CD14-positive monocyte (primary cell): ENCODE measurements at regions of chr19 and their contacts with region 1.

Region 1: GRCh38 chr19:41263850-41264580 is at the start of gene HNRNPUL1:
- DNase-seq: peak; percentile 100
- H3K4me3 ChIP-seq: peak within 1 kb of the TSS; percentile 79 to 91 (median 84)
- H3K4me3 Mint-ChIP-seq: peak within 1 kb of the TSS; percentile 96 to 97
- H3K27ac ChIP-seq: peak within 1 kb of the TSS; percentile 99 to 100
- H3K27ac Mint-ChIP-seq: peak within 1 kb of the TSS; percentile 99 to 100 (median 100)
- H3K4me1 ChIP-seq: peaks cover 33 to 37% of the 10 kb centered on the region in 2 donors
- H3K4me1 Mint-ChIP-seq: peaks cover 37% of the 10 kb centered on the region
- H3K27me3 ChIP-seq: peaks cover 0 to 5% of the 10 kb centered on the region in 2 donors
- H3K27me3 Mint-ChIP-seq: peaks cover 4 to 13% (median 9%) of the 10 kb centered on the region in 3 donors
- CTCF ChIP-seq: peak; percentile 40
- polyA plus RNA-seq, gene HNRNPUL1: 22.6 to 55.3 (median 30.3) TPM

Region 2: DNA sequence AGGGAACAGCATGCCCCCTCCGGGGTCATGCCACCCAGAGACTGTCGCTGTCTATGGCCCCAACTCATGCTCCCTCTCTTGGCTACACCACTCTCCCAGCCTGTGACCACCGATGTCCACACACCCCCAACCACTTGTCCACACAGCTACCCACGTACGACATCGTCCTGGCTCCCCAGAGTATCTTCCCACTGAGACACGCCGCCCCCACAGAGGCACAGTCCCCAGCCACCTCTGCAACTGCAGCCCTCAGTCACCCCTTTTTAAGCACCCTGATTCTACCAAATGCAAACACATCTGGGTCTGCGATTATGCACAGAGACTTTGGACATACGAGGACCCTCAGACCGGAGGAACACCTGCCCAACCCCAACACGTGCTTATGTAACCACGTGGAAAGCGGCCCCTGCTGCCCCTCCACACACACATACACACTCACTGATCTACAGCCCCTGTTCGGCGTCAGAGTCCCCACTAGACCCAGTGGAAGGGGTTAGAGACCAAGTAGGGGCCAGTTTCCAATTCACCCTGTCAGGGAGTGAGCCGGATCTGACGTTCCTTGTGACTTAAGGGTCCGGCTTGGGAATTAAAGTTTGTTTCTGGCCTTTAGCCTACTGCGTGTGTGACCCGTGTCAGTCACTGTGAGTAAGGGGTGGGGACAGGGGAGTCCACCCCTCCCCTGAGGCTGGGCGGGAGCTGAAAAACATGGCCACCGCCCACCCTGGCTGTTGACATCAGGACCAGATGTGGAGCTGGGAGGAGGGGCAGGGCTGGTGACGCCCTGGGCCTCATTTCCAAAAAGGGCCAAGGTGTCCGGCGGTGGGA is 56.9 kb before region 1 on chr19:
- intact Hi-C with region 1: loop called (anchors 1 to 5 kb)
- DNase-seq: no peak
- H3K4me3 ChIP-seq: no peak overlapping the region
- H3K4me3 Mint-ChIP-seq: no peak overlapping the region
- H3K27ac ChIP-seq: no peak overlapping the region
- H3K27ac Mint-ChIP-seq: peak overlapping the region in 3 of 7 donors; percentile 13 to 21 (median 21)
- H3K4me1 ChIP-seq: no peaks in the 10 kb centered on the region
- H3K4me1 Mint-ChIP-seq: no peaks in the 10 kb centered on the region
- H3K27me3 ChIP-seq: no peaks in the 10 kb centered on the region
- H3K27me3 Mint-ChIP-seq: peaks cover 0 to 6% (median 1%) of the 10 kb centered on the region in 3 donors
- CTCF ChIP-seq: no peak

Region 3: DNA sequence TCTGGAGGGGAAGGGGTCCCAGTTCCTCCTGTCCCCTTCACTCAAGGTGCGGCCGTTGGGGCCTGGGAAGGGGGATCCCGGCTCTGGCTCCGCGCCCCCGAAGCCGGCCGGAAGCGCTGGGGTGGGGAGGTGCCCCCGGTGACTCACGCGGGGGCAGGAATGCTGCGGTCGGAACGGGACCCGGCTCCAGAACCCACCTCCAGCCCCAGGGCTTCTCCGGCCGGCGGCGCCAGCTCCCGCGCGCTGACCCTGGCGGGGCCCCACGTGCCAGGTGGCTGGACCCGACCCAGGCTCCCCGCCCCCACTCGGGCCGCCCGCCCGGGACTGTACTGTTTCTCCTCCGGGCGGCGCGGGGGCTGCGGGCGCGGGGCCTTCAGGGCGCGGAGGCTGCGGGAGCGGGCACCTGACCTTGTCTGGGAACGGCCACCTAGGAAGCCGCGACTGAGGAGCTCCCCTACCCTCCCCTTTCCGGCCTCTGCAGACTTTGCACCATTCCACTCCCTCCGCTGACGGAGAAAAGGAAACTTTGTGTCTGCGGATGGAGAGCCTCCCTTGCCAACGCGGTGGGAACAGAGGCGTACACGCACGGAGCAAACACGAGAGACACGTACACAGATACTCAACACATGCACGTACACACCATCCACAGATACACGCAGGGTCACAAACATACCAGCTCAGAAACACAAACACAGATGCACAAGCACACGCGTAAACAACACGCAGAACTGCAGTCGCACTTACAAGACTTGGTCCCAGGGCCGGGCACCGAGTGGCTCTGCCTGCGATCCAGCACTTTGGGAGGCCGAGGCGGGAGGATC is 37.8 kb before region 1 on chr19:
- intact Hi-C with region 1: loop called in 1 of 2 experiments (anchors 5 kb)
- DNase-seq: peak in 2 of 3 donors; percentile 13 to 43
- H3K4me3 ChIP-seq: peak overlapping the region; percentile 23 to 75 (median 51)
- H3K4me3 Mint-ChIP-seq: peak overlapping the region; percentile 76 to 92
- H3K27ac ChIP-seq: no peak overlapping the region
- H3K27ac Mint-ChIP-seq: peak overlapping the region in 5 of 7 donors; percentile 47 to 72 (median 59)
- H3K4me1 ChIP-seq: peaks cover 11 to 15% of the 10 kb centered on the region in 2 donors
- H3K4me1 Mint-ChIP-seq: peaks cover 26% of the 10 kb centered on the region
- H3K27me3 ChIP-seq: peaks cover 3 to 23% of the 10 kb centered on the region in 2 donors
- H3K27me3 Mint-ChIP-seq: peaks cover 35 to 56% (median 38%) of the 10 kb centered on the region in 3 donors
- CTCF ChIP-seq: no peak

Region 4: GRCh38 chr19:41298348-41298964 is 34.4 kb after region 1 on chr19:
- intact Hi-C with region 1: no loop called
- DNase-seq: peak; percentile 38 to 50 (median 40)
- H3K4me3 ChIP-seq: no peak overlapping the region
- H3K4me3 Mint-ChIP-seq: no peak overlapping the region
- H3K27ac ChIP-seq: peak overlapping the region; percentile 34 to 77
- H3K27ac Mint-ChIP-seq: peak overlapping the region; percentile 81 to 96 (median 90)
- H3K4me1 ChIP-seq: peaks cover 12 to 24% of the 10 kb centered on the region in 2 donors
- H3K4me1 Mint-ChIP-seq: peaks cover 41% of the 10 kb centered on the region
- H3K27me3 ChIP-seq: no peaks in the 10 kb centered on the region
- H3K27me3 Mint-ChIP-seq: no peaks in the 10 kb centered on the region
- CTCF ChIP-seq: no peak

Region 5: DNA sequence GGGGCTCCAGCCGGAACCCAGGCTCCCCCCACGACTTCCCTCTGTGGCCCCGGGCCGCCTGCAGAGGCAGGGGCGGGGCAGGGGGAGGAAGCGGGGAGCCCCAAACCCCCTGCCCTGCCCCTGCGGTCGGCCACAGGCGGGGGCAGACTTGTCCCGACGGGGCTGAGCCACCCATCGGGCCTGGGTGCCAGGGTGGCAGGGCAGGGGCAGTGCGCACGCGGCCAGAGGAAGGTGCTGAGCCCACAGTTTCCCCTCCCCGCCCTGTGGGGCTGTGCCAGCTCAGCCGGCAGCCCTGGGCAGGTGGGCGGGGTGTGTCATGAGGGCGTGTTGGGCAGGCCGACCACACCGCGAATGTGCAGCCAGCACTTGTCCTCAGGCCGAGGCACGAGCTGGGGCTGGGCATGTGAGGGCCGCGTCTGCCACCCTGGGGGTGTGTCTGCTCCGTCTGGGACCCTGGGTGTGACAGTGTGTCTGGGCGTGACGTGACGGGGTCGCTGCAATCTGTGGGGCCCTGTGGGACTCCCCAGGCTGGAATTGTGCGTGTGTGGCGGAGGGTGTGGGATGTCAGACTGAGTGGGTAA is 63.7 kb after region 1 on chr19:
- intact Hi-C with region 1: loop called in 1 of 2 experiments (anchors 2 kb)
- DNase-seq: peak; percentile 91 to 96 (median 93)
- H3K4me3 ChIP-seq: peak overlapping the region; percentile 0 to 62 (median 38)
- H3K4me3 Mint-ChIP-seq: peak overlapping the region; percentile 84 to 93
- H3K27ac ChIP-seq: peak overlapping the region; percentile 90 to 96
- H3K27ac Mint-ChIP-seq: peak overlapping the region; percentile 95 to 99 (median 99)
- H3K4me1 ChIP-seq: peaks cover 93 to 100% of the 10 kb centered on the region in 2 donors
- H3K4me1 Mint-ChIP-seq: peaks cover 80% of the 10 kb centered on the region
- H3K27me3 ChIP-seq: no peaks in the 10 kb centered on the region
- H3K27me3 Mint-ChIP-seq: peaks cover 0 to 2% (median 0%) of the 10 kb centered on the region in 3 donors
- CTCF ChIP-seq: no peak

Region 6: GRCh38 chr19:41353466-41354342 is 89.7 kb after region 1 on chr19 and contains the start of gene TGFB1:
- intact Hi-C with region 1: loop called in 1 of 2 experiments (anchors 5 kb)
- DNase-seq: peak; percentile 88 to 94 (median 94)
- H3K4me3 ChIP-seq: peak within 1 kb of the TSS; percentile 89 to 97 (median 95)
- H3K4me3 Mint-ChIP-seq: peak within 1 kb of the TSS; percentile 94 to 100
- H3K27ac ChIP-seq: peak within 1 kb of the TSS; percentile 56 to 88
- H3K27ac Mint-ChIP-seq: peak within 1 kb of the TSS; percentile 91 to 98 (median 96)
- H3K4me1 ChIP-seq: peaks cover 70 to 73% of the 10 kb centered on the region in 2 donors
- H3K4me1 Mint-ChIP-seq: peaks cover 71% of the 10 kb centered on the region
- H3K27me3 ChIP-seq: no peaks in the 10 kb centered on the region
- H3K27me3 Mint-ChIP-seq: peaks cover 0 to 1% (median 0%) of the 10 kb centered on the region in 3 donors
- CTCF ChIP-seq: peak; percentile 93
- polyA plus RNA-seq, gene TGFB1: 30.6 to 138 (median 42.2) TPM

Region 7: GRCh38 chr19:41439441-41440222 is 175.6 kb after region 1 on chr19 and contains the start of gene DMAC2:
- intact Hi-C with region 1: loop called in 1 of 2 experiments (anchors 10 kb)
- DNase-seq: peak; percentile 91 to 96 (median 93)
- H3K4me3 ChIP-seq: peak within 1 kb of the TSS; percentile 62 to 92 (median 91)
- H3K4me3 Mint-ChIP-seq: peak within 1 kb of the TSS in 1 of 2 donors; percentile 66
- H3K27ac ChIP-seq: peak within 1 kb of the TSS; percentile 92 to 94
- H3K27ac Mint-ChIP-seq: peak within 1 kb of the TSS in 2 of 7 donors; percentile 31 to 52
- H3K4me1 ChIP-seq: peaks cover 27% of the 10 kb centered on the region in 2 donors
- H3K4me1 Mint-ChIP-seq: peaks cover 39% of the 10 kb centered on the region
- H3K27me3 ChIP-seq: no peaks in the 10 kb centered on the region
- H3K27me3 Mint-ChIP-seq: peaks cover 1 to 5% (median 3%) of the 10 kb centered on the region in 3 donors
- CTCF ChIP-seq: peak; percentile 36
- polyA plus RNA-seq, gene DMAC2: 33.2 to 48.0 (median 43.8) TPM